ENCODE measurements at regions of chr12 and their contacts with region 1.

Region 1: GRCh38 chr12:123365025-123365917 is 624 bp upstream of the SBNO1 start:
- DNase-seq: peak; percentile 91 to 99 (median 98)
- ATAC-seq: peak; percentile 85
- H3K4me3 ChIP-seq: peak overlapping the region; percentile 97
- H3K4me3 Mint-ChIP-seq: peak overlapping the region; percentile 89 to 98 (median 95)
- H3K27ac ChIP-seq: peak overlapping the region; percentile 86
- H3K27ac Mint-ChIP-seq: peak overlapping the region; percentile 93 to 99 (median 95)
- H3K4me1 ChIP-seq: peaks cover 14 to 16% of the 10 kb centered on the region in 2 donors
- H3K4me1 Mint-ChIP-seq: peaks cover 11 to 29% (median 16%) of the 10 kb centered on the region in 7 donors
- H3K27me3 ChIP-seq: no peaks in the 10 kb centered on the region
- H3K27me3 Mint-ChIP-seq: no peaks in the 10 kb centered on the region

Region 2: DNA sequence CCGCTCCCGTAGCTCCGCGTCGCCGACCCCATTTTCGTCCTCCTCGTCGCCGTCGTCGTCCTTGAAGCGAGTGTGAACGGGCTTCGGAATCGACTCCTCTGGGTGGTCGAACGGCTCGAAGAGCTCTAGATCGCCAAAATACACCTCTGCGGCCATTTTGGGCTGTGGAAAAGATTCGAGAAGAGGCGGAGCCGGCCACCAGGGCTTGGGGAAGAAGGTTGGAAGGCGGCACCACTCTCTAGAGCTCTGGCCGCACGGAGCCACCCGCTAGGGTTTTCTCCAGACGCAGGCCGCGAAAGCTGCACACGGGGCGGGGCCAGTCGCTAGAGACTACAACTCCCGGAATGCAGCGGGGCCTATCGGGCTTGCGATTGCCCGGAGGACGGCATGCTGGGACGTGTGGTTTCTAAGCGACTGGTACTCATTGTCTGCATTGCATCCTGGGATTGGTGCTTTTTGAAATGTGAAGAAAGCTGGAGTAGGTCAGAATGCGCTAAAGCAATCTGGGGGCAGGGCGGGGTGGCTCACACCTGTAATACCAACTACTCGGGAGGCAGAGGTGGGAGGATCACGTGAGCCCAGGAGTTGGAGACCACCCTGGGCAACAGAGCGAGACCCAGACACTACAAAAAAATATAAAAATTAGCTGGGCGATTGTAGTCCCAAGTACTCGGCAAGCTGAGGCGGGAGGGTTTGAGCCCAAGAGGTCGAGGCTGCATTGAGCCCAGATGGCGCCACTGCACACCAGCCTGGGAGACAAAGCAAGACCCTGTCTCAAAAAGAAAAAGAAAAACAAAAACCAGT is 864.4 kb before region 1 on chr12 and contains the start of gene ZCCHC8:
- CTCF ChIA-PET with region 1: no interaction called
- POLR2A ChIA-PET with region 1: no interaction called
- intact Hi-C with region 1: loop called (anchors 1 to 2 kb)
- DNase-seq: peak; percentile 83 to 97 (median 94)
- ATAC-seq: peak; percentile 96
- H3K4me3 ChIP-seq: peak within 1 kb of the TSS; percentile 97
- H3K4me3 Mint-ChIP-seq: peak within 1 kb of the TSS; percentile 83 to 99 (median 96)
- H3K27ac ChIP-seq: peak within 1 kb of the TSS; percentile 92
- H3K27ac Mint-ChIP-seq: peak within 1 kb of the TSS; percentile 89 to 98 (median 96)
- H3K4me1 ChIP-seq: peaks cover 9 to 15% of the 10 kb centered on the region in 2 donors
- H3K4me1 Mint-ChIP-seq: peaks cover 22 to 47% (median 39%) of the 10 kb centered on the region in 7 donors
- H3K27me3 ChIP-seq: no peaks in the 10 kb centered on the region
- H3K27me3 Mint-ChIP-seq: no peaks in the 10 kb centered on the region
- total RNA-seq, gene ZCCHC8: 44.4 to 54.0 (median 46.8) TPM

Region 3: DNA sequence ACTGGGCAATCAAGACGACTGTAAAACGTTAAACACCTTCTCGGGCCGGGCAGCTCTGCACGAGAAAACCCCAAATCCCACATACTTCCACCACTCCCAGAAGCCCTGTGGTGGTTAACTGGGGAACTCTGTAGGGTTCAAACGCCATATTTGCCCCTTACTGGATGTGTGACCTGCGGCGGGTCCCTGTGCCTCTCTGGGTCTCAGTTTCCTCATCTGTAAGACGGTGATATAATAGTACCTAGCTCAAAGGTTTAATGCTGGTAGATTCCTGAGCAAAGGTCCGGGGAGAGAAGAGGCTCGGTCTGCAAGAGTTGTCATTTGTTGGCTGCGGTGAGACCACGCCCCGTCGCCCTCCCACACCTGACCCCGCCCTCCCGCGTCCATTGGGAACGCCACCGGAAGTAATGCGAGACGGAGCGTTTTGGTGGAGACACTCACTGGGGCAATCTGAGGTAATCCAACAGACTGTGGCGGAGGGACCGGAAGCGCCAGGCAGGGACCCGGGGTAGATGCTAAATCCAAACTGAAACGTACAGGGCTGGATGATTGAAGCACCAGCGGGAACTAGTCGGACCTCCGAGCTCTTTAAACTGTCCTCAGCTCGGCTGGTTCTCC is 390.9 kb before region 1 on chr12:
- CTCF ChIA-PET with region 1: no interaction called
- POLR2A ChIA-PET with region 1: no interaction called
- intact Hi-C with region 1: loop called (anchors 1 kb)
- DNase-seq: peak; percentile 92 to 98 (median 98)
- ATAC-seq: peak; percentile 92
- H3K4me3 ChIP-seq: peak overlapping the region; percentile 100
- H3K4me3 Mint-ChIP-seq: peak overlapping the region; percentile 92 to 99 (median 97)
- H3K27ac ChIP-seq: peak overlapping the region; percentile 98
- H3K27ac Mint-ChIP-seq: peak overlapping the region; percentile 99 to 100 (median 99)
- H3K4me1 ChIP-seq: peaks cover 18 to 23% of the 10 kb centered on the region in 2 donors
- H3K4me1 Mint-ChIP-seq: peaks cover 17 to 39% (median 30%) of the 10 kb centered on the region in 7 donors
- H3K27me3 ChIP-seq: no peaks in the 10 kb centered on the region
- H3K27me3 Mint-ChIP-seq: peaks cover 0 to 3% (median 0%) of the 10 kb centered on the region in 5 donors

Region 4: DNA sequence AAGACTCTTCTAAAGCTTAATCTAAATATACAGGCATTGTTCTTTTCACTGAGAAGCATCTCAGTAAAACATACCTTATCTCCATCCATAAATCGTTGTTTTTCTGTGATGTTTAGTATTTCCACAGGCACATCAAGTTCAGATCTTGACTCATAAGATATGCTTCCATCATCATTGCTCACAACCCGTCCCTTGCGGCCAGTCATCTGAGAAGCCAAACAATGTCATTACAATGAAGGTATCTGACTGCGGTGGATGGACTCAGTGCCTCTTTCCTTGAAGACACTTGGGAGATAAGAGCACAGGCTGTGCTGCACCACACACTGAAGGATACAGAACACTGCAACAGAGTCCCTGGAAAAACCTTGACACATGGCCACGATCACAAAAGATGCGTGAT is 45.4 kb before region 1 on chr12:
- CTCF ChIA-PET with region 1: no interaction called
- POLR2A ChIA-PET with region 1: interaction called, 3 read pairs
- intact Hi-C with region 1: loop called in 1 of 2 experiments (anchors 10 kb)
- DNase-seq: no peak
- ATAC-seq: no peak
- H3K4me3 ChIP-seq: no peak overlapping the region
- H3K4me3 Mint-ChIP-seq: no peak overlapping the region
- H3K27ac ChIP-seq: no peak overlapping the region
- H3K27ac Mint-ChIP-seq: no peak overlapping the region
- H3K4me1 ChIP-seq: no peaks in the 10 kb centered on the region
- H3K4me1 Mint-ChIP-seq: no peaks in the 10 kb centered on the region
- H3K27me3 ChIP-seq: no peaks in the 10 kb centered on the region
- H3K27me3 Mint-ChIP-seq: no peaks in the 10 kb centered on the region

Region 5: DNA sequence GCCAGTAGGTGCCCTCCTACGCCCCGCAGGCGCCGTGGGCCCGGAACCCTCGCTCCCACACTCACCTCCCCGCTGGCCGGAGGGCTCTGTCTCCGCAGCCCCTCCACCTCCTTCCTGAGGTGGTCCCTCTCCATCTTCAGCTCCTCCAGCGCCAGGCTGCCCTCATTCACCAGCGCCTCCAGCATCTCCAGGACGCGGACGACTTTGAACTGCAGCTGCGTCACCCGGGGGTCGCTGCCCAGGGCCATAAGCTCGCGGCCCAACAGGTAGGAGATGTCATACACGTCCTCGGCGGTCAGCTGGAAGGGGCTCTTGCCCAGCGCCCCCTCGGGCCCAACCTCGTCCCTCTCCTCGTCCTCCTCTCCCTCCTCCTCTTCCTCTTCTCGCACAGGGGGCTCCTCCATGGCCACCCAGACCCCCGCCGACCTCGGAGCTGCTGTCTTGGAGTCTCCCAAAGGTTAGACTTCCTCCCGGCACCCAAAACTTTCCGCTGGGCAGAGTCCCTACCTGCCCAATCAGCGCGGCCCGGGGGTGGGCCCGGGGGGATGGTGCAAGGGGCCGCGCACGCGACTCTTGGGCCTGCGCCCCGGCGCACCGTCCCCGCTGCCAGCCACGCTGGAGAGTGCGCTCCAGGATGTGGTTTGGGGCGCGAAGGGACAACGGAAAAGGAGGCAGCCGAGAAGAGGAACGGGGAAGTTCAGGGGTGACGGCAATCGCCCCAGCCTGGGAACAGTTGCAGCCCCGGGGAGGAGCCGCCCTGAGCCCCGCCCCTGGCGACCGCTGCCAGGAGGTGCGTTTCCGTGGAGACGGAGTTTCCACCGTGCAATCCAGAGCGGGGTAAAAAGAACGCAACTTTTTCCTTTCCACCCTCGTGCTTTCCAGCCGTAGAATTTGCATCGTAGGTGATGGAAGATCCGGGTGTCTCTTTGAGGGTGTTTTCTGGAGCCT is 71.0 kb after region 1 on chr12 and contains the start of gene RILPL2:
- CTCF ChIA-PET with region 1: interaction called, 3 read pairs
- POLR2A ChIA-PET with region 1: interaction called, 3 read pairs
- intact Hi-C with region 1: loop called (anchors 1 kb)
- DNase-seq: peak; percentile 79 to 96 (median 88)
- ATAC-seq: peak; percentile 91
- H3K4me3 ChIP-seq: peak within 1 kb of the TSS; percentile 96
- H3K4me3 Mint-ChIP-seq: peak within 1 kb of the TSS; percentile 85 to 97 (median 93)
- H3K27ac ChIP-seq: peak within 1 kb of the TSS; percentile 88
- H3K27ac Mint-ChIP-seq: peak within 1 kb of the TSS; percentile 77 to 96 (median 88)
- H3K4me1 ChIP-seq: peaks cover 11 to 29% of the 10 kb centered on the region in 2 donors
- H3K4me1 Mint-ChIP-seq: peaks cover 24 to 47% (median 33%) of the 10 kb centered on the region in 7 donors
- H3K27me3 ChIP-seq: no peaks in the 10 kb centered on the region
- H3K27me3 Mint-ChIP-seq: no peaks in the 10 kb centered on the region
- total RNA-seq, gene RILPL2: 4.3 to 12.8 (median 5.6) TPM

Region 6: GRCh38 chr12:123601602-123602489 is 236.6 kb after region 1 on chr12 and contains the start of gene DDX55:
- CTCF ChIA-PET with region 1: interaction called, 3 read pairs
- POLR2A ChIA-PET with region 1: interaction called, 15 read pairs
- intact Hi-C with region 1: loop called in 1 of 2 experiments (anchors 1 kb)
- DNase-seq: peak; percentile 77 to 87 (median 86)
- ATAC-seq: peak; percentile 96
- H3K4me3 ChIP-seq: peak within 1 kb of the TSS; percentile 99
- H3K4me3 Mint-ChIP-seq: peak within 1 kb of the TSS; percentile 89 to 99 (median 97)
- H3K27ac ChIP-seq: peak within 1 kb of the TSS; percentile 84
- H3K27ac Mint-ChIP-seq: peak within 1 kb of the TSS; percentile 83 to 98 (median 93)
- H3K4me1 ChIP-seq: peaks cover 4 to 8% of the 10 kb centered on the region in 2 donors
- H3K4me1 Mint-ChIP-seq: peaks cover 11 to 47% (median 30%) of the 10 kb centered on the region in 7 donors
- H3K27me3 ChIP-seq: no peaks in the 10 kb centered on the region
- H3K27me3 Mint-ChIP-seq: no peaks in the 10 kb centered on the region
- total RNA-seq, gene DDX55: 26.0 to 54.0 (median 43.4) TPM

Region 7: DNA sequence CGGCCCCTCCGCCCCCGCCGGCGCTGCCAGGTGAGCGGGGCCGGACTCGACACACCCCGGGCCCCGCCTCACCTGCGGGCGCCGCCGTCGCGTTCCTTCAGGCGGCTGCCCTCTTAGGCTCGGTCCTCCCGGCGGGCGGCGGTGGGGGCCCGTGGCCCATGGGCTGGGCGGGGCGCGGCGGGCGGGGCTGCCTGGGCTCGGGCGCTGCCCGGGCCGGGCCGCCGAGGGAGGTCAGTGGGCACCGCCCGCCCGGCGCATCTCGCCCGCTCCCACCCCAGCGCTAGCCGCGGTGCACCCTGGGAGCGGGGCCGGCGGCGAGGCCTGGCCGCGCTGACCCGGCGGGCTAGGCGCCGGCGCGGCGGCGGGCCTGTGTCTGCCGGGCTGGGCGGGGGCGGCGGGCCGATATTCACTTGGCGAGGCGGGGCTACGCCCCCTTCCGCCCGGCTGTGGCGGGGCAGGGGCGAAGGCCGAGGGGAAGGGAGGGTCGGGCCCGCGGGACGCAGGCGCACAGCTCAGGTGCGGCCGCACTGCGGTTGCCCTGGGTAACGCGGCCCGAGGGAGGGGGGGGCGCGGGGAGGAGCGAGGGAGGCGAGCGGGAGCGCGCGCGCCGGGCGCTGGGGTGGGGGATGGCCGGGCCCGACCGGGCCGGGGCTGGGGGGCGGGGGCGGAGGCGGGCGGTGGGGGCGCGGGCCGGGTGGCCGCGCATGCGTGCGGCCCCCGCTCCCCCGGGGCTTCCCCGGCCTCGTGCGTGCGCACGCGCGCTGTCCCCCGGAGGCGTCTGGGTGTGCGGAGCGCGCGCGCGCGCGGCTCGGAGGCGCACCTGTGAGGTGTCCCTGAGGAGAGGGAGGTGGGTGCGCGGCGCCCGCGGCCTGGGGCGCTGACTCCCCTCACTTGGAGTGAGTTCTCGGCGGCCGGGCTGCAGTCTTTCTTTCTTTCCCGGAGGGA is 607.5 kb after region 1 on chr12 and contains the starts of genes CCDC92 and ZNF664:
- CTCF ChIA-PET with region 1: no interaction called
- POLR2A ChIA-PET with region 1: no interaction called
- intact Hi-C with region 1: loop called in 1 of 2 experiments (anchors 10 kb)
- DNase-seq: peak; percentile 87 to 97 (median 92)
- ATAC-seq: peak; percentile 90
- H3K4me3 ChIP-seq: peak within 1 kb of the TSS; percentile 58
- H3K4me3 Mint-ChIP-seq: peak within 1 kb of the TSS; percentile 90 to 99 (median 96)
- H3K27ac ChIP-seq: peak within 1 kb of the TSS; percentile 69
- H3K27ac Mint-ChIP-seq: peak within 1 kb of the TSS; percentile 87 to 98 (median 91)
- H3K4me1 ChIP-seq: peaks cover 0 to 9% of the 10 kb centered on the region in 2 donors
- H3K4me1 Mint-ChIP-seq: peaks cover 13 to 50% (median 45%) of the 10 kb centered on the region in 7 donors
- H3K27me3 ChIP-seq: no peaks in the 10 kb centered on the region
- H3K27me3 Mint-ChIP-seq: peaks cover 0 to 11% (median 0%) of the 10 kb centered on the region in 5 donors
- total RNA-seq, gene CCDC92: 17.3 to 24.9 (median 23.0) TPM
- total RNA-seq, gene ZNF664: 25.0 to 57.5 (median 45.8) TPM